CD8-positive, alpha-beta T cell (primary cell): ENCODE measurements at regions of chr9 and their contacts with region 1.

Region 1: DNA sequence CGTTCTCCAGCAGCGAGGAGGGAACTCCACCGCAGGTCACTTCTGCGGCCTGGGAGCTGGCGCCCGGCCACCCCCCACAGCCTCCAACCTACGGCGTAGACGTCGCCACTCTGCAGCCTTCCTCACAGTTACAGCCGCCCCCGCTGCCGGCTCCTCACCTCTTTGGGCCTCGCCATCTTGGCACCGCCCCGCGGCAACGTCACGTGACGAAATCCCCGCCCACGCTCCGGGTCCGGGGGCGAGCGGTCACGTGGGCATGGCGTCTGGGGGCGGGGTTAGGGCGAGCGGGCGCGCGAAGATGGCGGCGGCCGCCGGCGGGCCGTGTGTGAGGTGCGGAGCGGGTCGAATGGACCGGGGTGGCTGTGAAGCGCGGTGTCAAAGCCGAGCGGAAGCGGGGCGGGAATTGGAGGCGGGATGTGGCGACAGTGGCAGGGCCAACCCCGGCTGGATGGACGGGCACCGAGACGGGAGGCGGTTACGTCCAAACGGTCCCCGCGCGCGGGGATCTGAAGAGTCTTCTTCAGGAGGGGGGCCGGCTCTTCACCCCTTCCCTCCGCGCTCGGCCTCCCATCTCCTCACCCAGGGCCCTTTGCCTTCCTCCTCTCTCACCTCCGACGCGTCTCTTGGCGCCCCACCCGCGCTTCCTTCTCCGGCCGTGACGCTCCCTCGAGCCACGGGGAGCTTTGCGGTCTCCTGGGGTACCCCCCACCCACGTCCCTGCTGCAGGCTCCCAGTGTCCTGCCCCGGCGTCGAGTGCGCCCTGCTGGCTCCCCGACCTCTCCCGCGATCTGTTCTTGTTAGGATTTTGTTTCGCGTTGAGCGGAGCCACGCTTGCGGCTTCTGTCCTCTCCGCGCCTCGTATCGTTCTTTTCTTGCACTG is at the starts of genes DOLK and NUP188:
- DNase-seq: peak; percentile 97 to 100 (median 99)
- ATAC-seq: peak; percentile 87
- H3K4me3 ChIP-seq: peak within 1 kb of the TSS; percentile 93 to 99
- H3K4me3 Mint-ChIP-seq: peak within 1 kb of the TSS; percentile 99
- H3K27ac ChIP-seq: peak within 1 kb of the TSS; percentile 85 to 99
- H3K27ac Mint-ChIP-seq: peak within 1 kb of the TSS; percentile 97
- H3K4me1 ChIP-seq: peaks cover 20% of the 10 kb centered on the region
- H3K4me1 Mint-ChIP-seq: peaks cover 31% of the 10 kb centered on the region
- H3K27me3 ChIP-seq: no peaks in the 10 kb centered on the region
- H3K27me3 Mint-ChIP-seq: no peaks in the 10 kb centered on the region
- CTCF ChIP-seq: no peak
- total RNA-seq, gene DOLK: 10.4 to 10.7 TPM
- total RNA-seq, gene NUP188: 48.7 to 49.0 TPM

Region 2: DNA sequence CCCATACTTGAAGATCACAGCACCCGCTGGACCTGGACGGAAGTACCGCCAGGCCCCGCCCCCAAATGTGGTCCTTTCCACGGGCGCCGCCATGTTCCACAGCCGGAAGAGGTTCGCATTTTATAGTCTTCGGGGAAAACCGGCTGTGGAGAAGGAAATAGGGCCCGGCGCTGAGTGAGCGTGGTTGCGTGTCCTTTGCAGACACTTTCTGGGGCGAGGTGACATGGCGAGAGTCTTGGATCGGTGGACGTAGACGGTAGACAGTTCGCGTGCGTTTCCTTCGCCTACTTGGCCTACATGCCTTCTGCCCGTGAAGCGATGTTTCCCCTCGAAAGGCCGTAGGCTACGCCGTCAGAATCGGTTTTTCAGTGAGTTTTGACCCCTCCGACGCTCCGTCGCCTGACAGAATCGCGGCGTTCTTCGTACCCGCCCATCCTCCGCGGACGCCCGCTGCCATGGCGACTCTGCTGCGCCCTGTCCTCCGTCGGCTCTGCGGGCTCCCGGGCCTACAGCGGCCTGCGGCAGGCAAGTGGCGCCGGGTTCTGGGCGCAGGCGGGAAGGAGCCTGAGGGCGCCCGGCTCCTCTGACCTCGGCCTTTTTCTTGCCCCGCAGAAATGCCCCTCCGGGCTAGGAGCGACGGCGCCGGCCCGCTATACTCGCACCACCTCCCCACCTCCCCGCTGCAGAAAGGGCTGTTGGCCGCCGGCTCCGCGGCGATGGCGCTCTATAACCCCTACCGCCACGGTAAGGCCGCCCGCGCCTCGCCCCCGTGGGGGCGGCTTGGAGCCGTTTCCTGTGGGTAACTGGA is 625.1 kb before region 1 on chr9 and contains the starts of genes COQ4 and TRUB2:
- CTCF ChIA-PET with region 1: no interaction called
- POLR2A ChIA-PET with region 1: no interaction called
- intact Hi-C with region 1: loop called in 1 of 2 experiments (anchors 2 kb)
- DNase-seq: peak; percentile 83 to 97 (median 92)
- ATAC-seq: peak; percentile 86
- H3K4me3 ChIP-seq: peak within 1 kb of the TSS; percentile 88 to 89
- H3K4me3 Mint-ChIP-seq: peak within 1 kb of the TSS; percentile 95
- H3K27ac ChIP-seq: peak within 1 kb of the TSS; percentile 80 to 89
- H3K27ac Mint-ChIP-seq: peak within 1 kb of the TSS; percentile 96
- H3K4me1 ChIP-seq: peaks cover 17% of the 10 kb centered on the region
- H3K4me1 Mint-ChIP-seq: peaks cover 30% of the 10 kb centered on the region
- H3K27me3 ChIP-seq: no peaks in the 10 kb centered on the region
- H3K27me3 Mint-ChIP-seq: no peaks in the 10 kb centered on the region
- CTCF ChIP-seq: no peak
- total RNA-seq, gene COQ4: 18.2 to 20.1 TPM
- total RNA-seq, gene TRUB2: 9.8 to 12.9 TPM

Region 3: GRCh38 chr9:128504485-128505413 is 442.9 kb before region 1 on chr9 and contains the start of gene GLE1:
- CTCF ChIA-PET with region 1: no interaction called
- POLR2A ChIA-PET with region 1: no interaction called
- intact Hi-C with region 1: loop called in 1 of 2 experiments (anchors 1 kb)
- DNase-seq: peak; percentile 93 to 99 (median 97)
- ATAC-seq: peak; percentile 95
- H3K4me3 ChIP-seq: peak within 1 kb of the TSS; percentile 80 to 96
- H3K4me3 Mint-ChIP-seq: peak within 1 kb of the TSS; percentile 99
- H3K27ac ChIP-seq: peak within 1 kb of the TSS; percentile 84 to 90
- H3K27ac Mint-ChIP-seq: peak within 1 kb of the TSS; percentile 99
- H3K4me1 ChIP-seq: peaks cover 18% of the 10 kb centered on the region
- H3K4me1 Mint-ChIP-seq: peaks cover 38% of the 10 kb centered on the region
- H3K27me3 ChIP-seq: no peaks in the 10 kb centered on the region
- H3K27me3 Mint-ChIP-seq: no peaks in the 10 kb centered on the region
- CTCF ChIP-seq: no peak
- total RNA-seq, gene GLE1: 6.6 to 8.5 TPM

Region 4: DNA sequence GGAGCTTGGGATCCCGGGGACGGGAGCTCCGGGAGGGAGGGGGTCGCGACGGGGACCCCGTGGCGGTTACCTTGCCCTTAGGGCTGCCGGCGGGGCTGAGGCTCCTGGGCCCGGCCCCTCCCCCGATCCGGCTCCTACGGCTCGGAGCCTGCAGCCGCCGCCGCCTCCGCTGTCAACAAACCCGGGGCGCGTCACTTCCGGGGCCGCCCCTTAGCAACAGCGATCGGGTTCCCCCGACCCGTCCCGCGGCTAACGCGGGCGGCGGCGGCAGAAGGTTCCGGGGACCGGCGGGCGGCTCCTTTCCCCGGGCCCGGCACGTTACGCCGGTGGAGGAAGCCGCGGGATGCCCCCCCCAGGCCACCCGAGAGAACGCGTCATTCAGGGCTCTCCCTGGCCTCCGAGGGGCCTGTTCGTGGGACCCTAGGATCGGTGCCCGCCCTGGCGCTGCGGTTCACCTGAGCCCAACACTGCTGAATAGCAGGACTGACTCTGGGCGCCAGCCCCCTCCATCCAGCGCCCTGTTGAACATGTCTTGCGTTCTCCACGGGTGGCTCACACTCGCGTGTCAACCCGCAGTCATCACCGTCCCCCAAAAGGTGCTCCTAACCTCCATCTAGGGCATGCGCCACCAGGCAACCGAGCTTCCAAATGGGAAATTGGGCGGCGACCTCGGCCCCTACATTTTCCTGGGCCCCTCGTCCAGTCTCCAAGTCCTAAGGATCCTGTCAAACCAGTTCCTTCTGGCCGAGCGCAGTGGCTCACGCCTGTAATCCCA is 175.7 kb before region 1 on chr9 and contains the start of gene ZER1:
- CTCF ChIA-PET with region 1: no interaction called
- POLR2A ChIA-PET with region 1: no interaction called
- intact Hi-C with region 1: loop called in 1 of 2 experiments (anchors 5 kb)
- DNase-seq: peak; percentile 86 to 98 (median 95)
- ATAC-seq: peak; percentile 85
- H3K4me3 ChIP-seq: peak within 1 kb of the TSS; percentile 82 to 98
- H3K4me3 Mint-ChIP-seq: peak within 1 kb of the TSS; percentile 96
- H3K27ac ChIP-seq: peak within 1 kb of the TSS; percentile 80 to 98
- H3K27ac Mint-ChIP-seq: peak within 1 kb of the TSS; percentile 99
- H3K4me1 ChIP-seq: peaks cover 22% of the 10 kb centered on the region
- H3K4me1 Mint-ChIP-seq: peaks cover 33% of the 10 kb centered on the region
- H3K27me3 ChIP-seq: no peaks in the 10 kb centered on the region
- H3K27me3 Mint-ChIP-seq: no peaks in the 10 kb centered on the region
- CTCF ChIP-seq: no peak
- total RNA-seq, gene ZER1: 35.9 to 45.2 TPM

Region 5: GRCh38 chr9:128870128-128870952 is 77.3 kb before region 1 on chr9:
- CTCF ChIA-PET with region 1: no interaction called
- POLR2A ChIA-PET with region 1: no interaction called
- intact Hi-C with region 1: no loop called
- DNase-seq: no peak
- ATAC-seq: no peak
- H3K4me3 ChIP-seq: no peak overlapping the region
- H3K4me3 Mint-ChIP-seq: no peak overlapping the region
- H3K27ac ChIP-seq: no peak overlapping the region
- H3K27ac Mint-ChIP-seq: no peak overlapping the region
- H3K4me1 ChIP-seq: no peaks in the 10 kb centered on the region
- H3K4me1 Mint-ChIP-seq: peaks cover 6% of the 10 kb centered on the region
- H3K27me3 ChIP-seq: no peaks in the 10 kb centered on the region
- H3K27me3 Mint-ChIP-seq: no peaks in the 10 kb centered on the region
- CTCF ChIP-seq: no peak

Region 6: GRCh38 chr9:128902351-128903078 is 45.1 kb before region 1 on chr9:
- CTCF ChIA-PET with region 1: no interaction called
- POLR2A ChIA-PET with region 1: no interaction called
- intact Hi-C with region 1: loop called in 1 of 2 experiments (anchors 1 kb)
- DNase-seq: peak; percentile 71 to 95 (median 90)
- ATAC-seq: peak; percentile 93
- H3K4me3 ChIP-seq: peak overlapping the region; percentile 32 to 56
- H3K4me3 Mint-ChIP-seq: peak overlapping the region; percentile 81
- H3K27ac ChIP-seq: peak overlapping the region; percentile 87 to 92
- H3K27ac Mint-ChIP-seq: peak overlapping the region; percentile 91
- H3K4me1 ChIP-seq: peaks cover 69% of the 10 kb centered on the region
- H3K4me1 Mint-ChIP-seq: peaks cover 69% of the 10 kb centered on the region
- H3K27me3 ChIP-seq: no peaks in the 10 kb centered on the region
- H3K27me3 Mint-ChIP-seq: no peaks in the 10 kb centered on the region
- CTCF ChIP-seq: no peak

Region 7: GRCh38 chr9:129080602-129081387 is 133.1 kb after region 1 on chr9 and contains the start of gene DOLPP1:
- CTCF ChIA-PET with region 1: no interaction called
- POLR2A ChIA-PET with region 1: no interaction called
- intact Hi-C with region 1: loop called in 1 of 2 experiments (anchors 2 kb)
- DNase-seq: peak; percentile 97 to 99 (median 98)
- ATAC-seq: peak; percentile 92
- H3K4me3 ChIP-seq: peak within 1 kb of the TSS; percentile 79 to 85
- H3K4me3 Mint-ChIP-seq: peak within 1 kb of the TSS; percentile 89
- H3K27ac ChIP-seq: peak within 1 kb of the TSS; percentile 64 to 76
- H3K27ac Mint-ChIP-seq: peak within 1 kb of the TSS; percentile 81
- H3K4me1 ChIP-seq: peaks cover 30% of the 10 kb centered on the region
- H3K4me1 Mint-ChIP-seq: peaks cover 20% of the 10 kb centered on the region
- H3K27me3 ChIP-seq: no peaks in the 10 kb centered on the region
- H3K27me3 Mint-ChIP-seq: no peaks in the 10 kb centered on the region
- CTCF ChIP-seq: no peak
- total RNA-seq, gene DOLPP1: 4.6 to 5.1 TPM